Sigmoid colon (tissue), 7 donors: ENCODE measurements at regions of chr11 and their contacts with region 1.

Region 1: DNA sequence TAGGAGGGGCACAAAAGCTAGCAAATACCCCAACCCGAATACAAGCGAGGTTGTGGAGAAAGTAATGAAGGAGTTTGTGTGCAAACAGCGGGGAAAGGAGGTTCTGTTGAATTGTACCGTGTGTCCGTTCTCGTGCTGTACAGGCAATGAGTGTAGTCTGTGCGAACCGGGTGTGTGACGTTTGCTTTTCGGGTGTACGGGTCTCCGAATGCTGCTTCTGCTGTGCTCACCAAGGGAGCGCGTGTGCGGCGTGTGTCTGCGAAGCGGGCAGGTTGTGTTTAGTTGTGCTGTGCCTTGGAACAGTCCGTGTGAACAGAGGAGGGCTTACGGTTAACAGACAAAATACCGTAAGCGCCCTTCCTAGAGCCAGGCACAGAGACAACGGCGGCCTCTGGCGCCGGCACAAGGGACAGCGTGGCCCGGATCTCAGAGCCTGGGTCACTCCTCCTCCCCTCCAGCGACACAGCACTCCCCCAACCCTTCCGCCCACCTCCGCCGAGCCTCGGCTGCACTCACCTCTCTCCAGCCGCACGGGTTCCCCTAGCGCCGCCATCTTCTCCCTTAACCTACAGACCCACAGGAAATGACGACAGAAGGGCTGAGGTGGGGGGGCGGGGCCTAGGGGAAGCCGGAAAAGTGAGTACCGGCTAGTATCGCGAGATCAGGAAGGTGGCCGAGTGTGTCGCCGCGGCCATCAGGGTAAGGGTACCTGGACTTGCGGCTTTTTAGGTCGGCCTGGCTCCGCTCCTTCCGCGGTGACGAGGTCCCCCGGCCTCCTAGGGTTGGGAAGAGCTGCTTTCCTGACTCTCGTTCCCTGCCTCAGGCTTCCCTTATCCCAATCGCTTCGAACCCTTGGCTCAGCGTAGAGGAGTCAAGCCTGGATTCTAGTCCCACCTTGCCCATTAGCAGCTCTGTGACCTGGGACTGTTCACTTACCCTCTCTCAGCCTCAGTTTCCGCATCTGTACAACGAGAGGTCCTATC is at the start of gene LIN7C:
- DNase-seq: peak; percentile 98
- H3K4me3 ChIP-seq: peak within 1 kb of the TSS; percentile 74 to 88 (median 79)
- H3K27ac ChIP-seq: peak within 1 kb of the TSS; percentile 86 to 94 (median 90)
- H3K4me1 ChIP-seq: peaks cover 0 to 53% (median 32%) of the 10 kb centered on the region in 4 donors
- H3K27me3 ChIP-seq: no peaks in the 10 kb centered on the region
- CTCF ChIP-seq: no peak
- EP300 ChIP-seq: no peak
- POLR2A ChIP-seq: peak; percentile 92 to 94
- total RNA-seq, gene LIN7C: 34.3 to 53.3 (median 48.9) TPM

Region 2: GRCh38 chr11:27296497-27296896 is 210.0 kb before region 1 on chr11:
- intact Hi-C with region 1: no loop called
- DNase-seq: no peak
- H3K4me3 ChIP-seq: no peak overlapping the region
- H3K27ac ChIP-seq: no peak overlapping the region
- H3K4me1 ChIP-seq: peaks cover 0 to 10% (median 2%) of the 10 kb centered on the region in 4 donors
- H3K27me3 ChIP-seq: no peaks in the 10 kb centered on the region
- CTCF ChIP-seq: peak; percentile 49 to 72 (median 62)
- EP300 ChIP-seq: no peak
- POLR2A ChIP-seq: no peak

Region 3: DNA sequence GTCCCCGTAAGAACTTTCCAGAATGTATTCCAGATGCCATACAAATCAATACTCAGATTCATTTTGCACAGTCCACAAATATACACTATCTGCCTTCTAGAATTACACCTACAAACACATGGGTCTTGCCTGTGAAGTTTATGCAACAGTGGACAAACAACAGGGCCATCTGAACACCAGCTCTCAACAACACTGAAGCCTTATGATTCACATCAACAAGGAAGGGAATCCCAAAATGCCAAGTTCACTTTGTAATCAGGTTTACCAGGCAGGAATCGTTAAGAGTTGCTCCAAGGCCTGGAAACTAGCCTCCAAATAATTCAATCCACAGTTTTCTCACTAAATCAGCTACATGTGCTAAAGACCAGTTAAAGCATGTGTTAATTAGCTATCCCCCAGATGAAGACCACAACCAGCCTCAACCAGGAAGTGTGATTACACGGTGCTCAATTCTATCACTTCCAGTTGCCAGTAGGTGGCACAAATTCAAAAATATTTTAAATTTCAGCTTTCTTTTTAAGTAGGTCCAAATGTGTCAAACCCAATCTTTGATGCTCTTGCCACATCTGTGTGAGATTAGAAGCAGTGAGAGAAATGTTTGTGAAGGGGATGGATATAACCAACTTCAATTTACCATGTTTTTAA is 332.9 kb after region 1 on chr11:
- intact Hi-C with region 1: no loop called
- DNase-seq: no peak
- H3K4me3 ChIP-seq: no peak overlapping the region
- H3K27ac ChIP-seq: no peak overlapping the region
- H3K4me1 ChIP-seq: no peaks in the 10 kb centered on the region
- H3K27me3 ChIP-seq: no peaks in the 10 kb centered on the region
- CTCF ChIP-seq: no peak
- EP300 ChIP-seq: no peak
- POLR2A ChIP-seq: no peak

Region 4: GRCh38 chr11:28107748-28108618 is 601.5 kb after region 1 on chr11 and contains the starts of genes KIF18A and METTL15:
- intact Hi-C with region 1: loop called (anchors 10 kb)
- DNase-seq: peak; percentile 100
- H3K4me3 ChIP-seq: peak within 1 kb of the TSS; percentile 41 to 60 (median 54)
- H3K27ac ChIP-seq: peak within 1 kb of the TSS; percentile 79 to 83 (median 80)
- H3K4me1 ChIP-seq: peaks cover 0 to 38% (median 27%) of the 10 kb centered on the region in 4 donors
- H3K27me3 ChIP-seq: no peaks in the 10 kb centered on the region
- CTCF ChIP-seq: no peak
- EP300 ChIP-seq: peak in 1 of 4 donors; percentile 73
- POLR2A ChIP-seq: peak in 1 of 2 donors; percentile 57
- total RNA-seq, gene KIF18A: under 0.01 to 0.49 (median 0.34) TPM
- total RNA-seq, gene METTL15: 7.5 to 15.0 (median 12.1) TPM